Right lobe of liver (tissue), 6 donors: ENCODE measurements at regions of chr9 and their contacts with region 1.

Region 1: GRCh38 chr9:107239474-107239873 is 43.6 kb upstream of the RAD23B start:
- DNase-seq: no peak
- ATAC-seq: peak; percentile 78 to 92 (median 87)
- H3K4me3 ChIP-seq: no peak overlapping the region
- H3K27ac ChIP-seq: no peak overlapping the region
- H3K4me1 ChIP-seq: peaks cover 0 to 16% (median 7%) of the 10 kb centered on the region in 4 donors
- H3K27me3 ChIP-seq: no peaks in the 10 kb centered on the region
- CTCF ChIP-seq: peak; percentile 38 to 65 (median 54)
- POLR2A ChIP-seq: no peak

Region 2: DNA sequence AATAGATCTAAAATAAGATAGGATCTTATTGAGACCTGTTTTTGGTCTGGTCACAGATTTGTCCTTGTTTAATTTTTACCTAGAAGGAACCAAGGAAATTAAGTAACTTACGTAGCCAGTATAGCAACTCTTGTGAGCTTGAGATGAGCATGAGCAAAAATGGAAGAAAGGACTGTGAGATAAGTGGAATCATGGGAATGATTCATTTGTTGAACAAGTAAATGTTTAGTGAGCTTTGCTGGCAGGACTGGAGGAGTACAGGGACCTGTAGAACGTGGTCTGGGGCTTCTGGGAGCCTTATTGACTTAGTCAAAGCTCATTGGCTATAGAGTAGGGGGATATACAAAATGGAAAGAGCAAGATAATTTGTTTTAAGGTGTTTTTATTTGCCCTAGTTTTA is 46.6 kb after region 1 on chr9:
- intact Hi-C with region 1: no loop called
- DNase-seq: no peak
- ATAC-seq: peak in 1 of 4 donors; percentile 2
- H3K4me3 ChIP-seq: peak overlapping the region; percentile 86 to 95 (median 91)
- H3K27ac ChIP-seq: peak overlapping the region; percentile 98 to 99 (median 99)
- H3K4me1 ChIP-seq: peaks cover 0 to 63% (median 25%) of the 10 kb centered on the region in 4 donors
- H3K27me3 ChIP-seq: no peaks in the 10 kb centered on the region
- CTCF ChIP-seq: no peak
- POLR2A ChIP-seq: no peak

Region 3: DNA sequence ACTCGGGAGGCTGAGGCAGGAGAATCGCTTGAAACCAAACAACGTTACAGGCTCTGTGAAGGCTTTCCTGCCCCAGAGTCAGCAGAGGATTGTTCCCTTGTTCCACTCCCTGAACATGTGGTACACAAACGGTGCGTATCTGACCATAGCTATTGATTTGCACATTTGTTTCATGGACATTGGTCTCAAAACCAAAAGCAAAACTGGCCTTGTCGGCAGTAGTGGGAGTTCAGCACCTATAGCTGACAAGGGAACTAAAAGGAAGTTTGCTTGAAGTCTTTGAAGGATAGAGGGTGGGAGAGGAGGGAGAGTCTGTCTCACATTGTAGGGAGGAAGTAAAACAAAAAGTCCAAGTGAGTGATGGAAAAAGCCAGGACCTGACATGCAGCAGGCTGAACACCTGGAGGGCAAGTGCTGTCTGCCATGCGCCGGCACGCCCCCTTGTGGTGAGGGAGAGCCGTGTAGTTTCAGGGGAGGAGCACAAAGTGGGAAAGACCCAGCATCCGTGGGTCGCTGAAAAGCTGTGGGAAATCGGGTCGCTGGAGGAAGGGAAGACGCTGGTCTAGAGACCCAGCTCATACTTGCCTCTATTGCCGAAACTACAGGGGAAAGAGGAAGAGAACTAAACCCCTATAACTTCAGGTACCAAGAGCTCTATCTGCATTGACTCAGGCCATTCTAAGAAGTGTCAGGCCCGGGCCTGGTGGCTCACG is 101.6 kb after region 1 on chr9:
- intact Hi-C with region 1: loop called in 1 of 2 experiments (anchors 5 kb)
- DNase-seq: peak; percentile 85 to 89 (median 86)
- ATAC-seq: peak; percentile 81 to 88 (median 82)
- H3K4me3 ChIP-seq: peak overlapping the region in 2 of 3 donors; percentile 36 to 37
- H3K27ac ChIP-seq: peak overlapping the region; percentile 45 to 70 (median 54)
- H3K4me1 ChIP-seq: peaks cover 0 to 11% (median 3%) of the 10 kb centered on the region in 4 donors
- H3K27me3 ChIP-seq: no peaks in the 10 kb centered on the region
- CTCF ChIP-seq: peak; percentile 88 to 94 (median 93)
- POLR2A ChIP-seq: no peak

Region 4: GRCh38 chr9:107504569-107505377 is 265.3 kb after region 1 on chr9:
- intact Hi-C with region 1: no loop called
- DNase-seq: peak in 1 of 3 donors; percentile 36
- ATAC-seq: peak in 3 of 4 donors; percentile 31 to 95 (median 66)
- H3K4me3 ChIP-seq: no peak overlapping the region
- H3K27ac ChIP-seq: peak overlapping the region in 1 of 3 donors; percentile 4
- H3K4me1 ChIP-seq: peaks cover 0 to 8% (median 3%) of the 10 kb centered on the region in 4 donors
- H3K27me3 ChIP-seq: no peaks in the 10 kb centered on the region
- CTCF ChIP-seq: no peak
- POLR2A ChIP-seq: no peak